ENCODE measurements at regions of chr1 and their contacts with region 1.

Region 1: DNA sequence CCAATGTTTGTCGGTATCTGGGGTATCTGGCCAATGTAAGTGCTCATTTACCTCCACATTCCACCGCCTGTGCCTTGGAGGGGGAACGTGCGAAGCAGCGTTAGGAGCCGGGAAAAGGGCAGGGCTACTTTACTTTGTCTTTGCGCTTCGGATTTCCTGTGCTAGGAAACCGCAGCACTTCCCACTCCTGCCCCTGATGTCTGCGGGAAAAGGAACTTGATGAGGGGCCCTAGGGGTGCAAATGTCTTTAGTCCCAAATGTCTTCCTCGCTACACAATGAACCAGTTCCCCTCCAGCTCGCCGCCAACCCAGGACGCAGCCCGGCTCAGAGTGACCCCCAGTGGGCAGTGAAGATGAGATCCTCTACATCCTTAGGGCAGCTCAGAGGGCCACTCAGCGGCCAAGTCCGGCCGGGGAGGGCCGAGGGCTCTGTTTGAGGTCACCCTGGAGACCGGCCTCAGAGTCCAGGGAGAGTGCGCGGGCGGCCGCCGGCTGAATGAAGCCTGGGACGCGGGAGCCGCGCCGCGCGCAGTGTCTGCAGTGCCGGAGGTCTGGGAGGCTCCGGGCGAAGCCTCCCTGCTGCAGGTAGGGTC is at the start of gene DYNLT5:
- DNase-seq: peak; percentile 70 to 74
- ATAC-seq: peak; percentile 92 to 97 (median 96)
- H3K4me3 ChIP-seq: peak within 1 kb of the TSS; percentile 33 to 64 (median 58)
- H3K27ac ChIP-seq: peak within 1 kb of the TSS; percentile 41 to 89 (median 81)
- H3K4me1 ChIP-seq: peaks cover 3 to 33% (median 20%) of the 10 kb centered on the region in 9 donors
- H3K27me3 ChIP-seq: peaks cover 0 to 19% (median 6%) of the 10 kb centered on the region in 7 donors
- CTCF ChIP-seq: peak in 7 of 9 donors; percentile 1 to 58 (median 38)
- total RNA-seq, gene DYNLT5: 0.89 to 4.2 (median 1.5) TPM

Region 2: DNA sequence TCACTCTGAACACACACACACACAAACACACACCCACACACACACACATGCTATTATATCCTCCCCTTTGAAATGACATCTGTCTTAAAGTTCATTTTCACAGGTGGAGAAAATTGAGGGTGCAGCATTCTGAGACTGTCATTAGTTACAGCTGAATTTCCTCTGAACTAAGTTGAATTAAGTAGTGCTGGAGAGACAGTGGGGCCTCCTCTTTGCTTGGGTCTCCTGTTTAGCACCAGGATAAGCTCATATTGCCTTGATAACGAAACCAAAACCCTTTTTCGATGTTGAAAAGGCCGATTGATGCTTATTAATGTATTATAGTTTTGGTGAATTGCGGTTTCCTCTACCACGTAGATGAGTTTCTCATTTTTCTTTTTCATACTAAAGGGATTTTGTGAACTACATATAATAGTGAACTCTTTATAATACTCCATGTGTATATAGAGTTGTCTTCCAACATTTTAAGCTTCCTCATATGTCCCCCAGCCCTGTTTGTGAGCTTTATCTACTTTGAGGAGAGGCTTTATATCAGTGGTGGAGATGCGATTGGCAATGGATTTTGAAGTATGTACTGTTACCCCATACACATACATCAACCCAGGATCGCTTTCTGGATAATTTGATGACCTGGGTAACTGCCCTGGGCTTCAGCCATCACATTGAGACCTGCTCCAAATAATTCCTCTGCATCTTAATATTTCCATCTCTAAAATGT is 17.6 kb after region 1 on chr1:
- intact Hi-C with region 1: no loop called
- DNase-seq: no peak
- ATAC-seq: no peak
- H3K4me3 ChIP-seq: no peak overlapping the region
- H3K27ac ChIP-seq: no peak overlapping the region
- H3K4me1 ChIP-seq: peaks cover 0 to 4% (median 0%) of the 10 kb centered on the region in 9 donors
- H3K27me3 ChIP-seq: no peaks in the 10 kb centered on the region
- CTCF ChIP-seq: no peak

Region 3: GRCh38 chr1:66924756-66925557 is 172.9 kb after region 1 on chr1 and contains the starts of genes DNAI4 and MIER1:
- intact Hi-C with region 1: loop called in 1 of 10 experiments (anchors 10 kb)
- DNase-seq: peak; percentile 98
- ATAC-seq: peak; percentile 97 to 99 (median 98)
- H3K4me3 ChIP-seq: peak within 1 kb of the TSS; percentile 53 to 93 (median 77)
- H3K27ac ChIP-seq: peak within 1 kb of the TSS; percentile 85 to 96 (median 92)
- H3K4me1 ChIP-seq: peaks cover 0 to 51% (median 36%) of the 10 kb centered on the region in 9 donors
- H3K27me3 ChIP-seq: no peaks in the 10 kb centered on the region
- CTCF ChIP-seq: peak in 4 of 9 donors; percentile 17 to 51 (median 26)
- total RNA-seq, gene DNAI4: 8.0 to 24.5 (median 14.4) TPM
- total RNA-seq, gene MIER1: 16.9 to 22.4 (median 20.1) TPM

Measured in heart right ventricle (tissue), 16 donors.